ENCODE measurements at regions of chr5 and their contacts with region 1.

Region 1: DNA sequence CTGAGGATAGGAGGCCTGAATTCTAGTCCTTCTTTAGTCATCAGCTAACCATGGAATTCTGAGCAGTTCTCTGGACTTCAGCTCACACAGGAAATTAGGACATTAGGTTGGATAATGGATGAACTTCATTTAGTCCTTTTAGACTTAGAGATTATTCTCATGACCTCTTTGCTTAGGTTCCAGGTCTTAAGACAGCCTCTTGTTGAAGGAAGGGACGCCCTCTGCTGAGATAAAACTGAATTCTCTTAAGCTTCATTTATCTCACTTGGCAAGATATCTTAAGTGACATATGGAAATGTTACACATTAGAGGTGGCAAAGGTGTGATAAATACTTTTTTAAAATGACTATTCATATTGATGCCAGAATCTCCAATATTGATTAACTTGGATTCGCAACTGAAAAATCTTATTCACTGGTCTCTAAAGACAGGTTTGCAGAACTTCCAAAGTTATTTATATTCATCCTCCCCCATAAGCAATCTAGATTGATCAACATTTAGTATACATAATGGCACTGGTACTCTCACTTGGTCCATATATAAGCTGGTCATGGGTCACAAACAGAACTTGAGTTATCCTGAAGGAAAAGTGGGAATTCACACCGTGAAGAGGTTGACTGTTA is 16.9 kb upstream of the ZNF366 start:
- DNase-seq: peak in 1 of 4 experiments; percentile 75
- ATAC-seq: peak; percentile 81
- H3K4me3 ChIP-seq: no peak overlapping the region
- H3K27ac ChIP-seq: no peak overlapping the region
- H3K4me1 ChIP-seq: no peaks in the 10 kb centered on the region
- H3K27me3 ChIP-seq: no peaks in the 10 kb centered on the region
- CTCF ChIP-seq: peak; percentile 47 to 86 (median 52); a peak in 4 of 6 replicates
- EP300 ChIP-seq: no peak
- POLR2A ChIP-seq: no peak
- RAD21 ChIP-seq: peak; percentile 97 to 99

Region 2: DNA sequence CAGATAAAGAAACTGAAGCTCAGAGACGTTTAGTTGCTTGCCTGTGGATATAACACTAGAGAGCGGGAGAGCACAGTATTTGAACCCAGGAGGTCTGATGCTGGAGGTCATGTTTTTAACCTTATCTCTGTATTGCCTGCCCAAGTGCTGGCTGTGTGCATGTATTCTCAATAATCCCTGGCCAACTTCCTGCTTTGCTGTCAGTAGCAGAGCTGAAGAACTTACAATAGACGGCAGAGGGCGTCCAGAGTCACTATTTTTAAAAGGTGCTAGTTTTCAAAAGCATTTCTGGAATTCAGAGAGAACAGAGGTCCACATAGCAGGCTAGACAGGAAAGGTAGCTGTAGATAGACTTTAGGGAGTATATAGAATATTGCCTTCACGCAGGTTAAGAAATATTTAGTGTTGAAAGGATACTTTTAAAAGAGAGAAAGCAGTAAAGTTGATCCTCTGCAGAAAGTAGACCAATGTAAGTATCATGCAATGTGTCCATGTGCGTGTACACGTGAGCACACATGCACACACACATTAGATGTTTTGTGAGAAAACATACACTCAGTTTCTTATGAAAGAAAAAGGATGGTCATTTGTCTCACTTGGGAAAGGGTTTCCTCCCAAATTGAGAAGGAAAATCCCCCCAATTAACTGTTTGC is 157.6 kb before region 1 on chr5:
- CTCF ChIA-PET with region 1: interaction called, 26 read pairs
- POLR2A ChIA-PET with region 1: no interaction called
- in situ Hi-C with region 1: no loop called
- intact Hi-C with region 1: loop called (anchors 1 kb)
- DNase-seq: peak; percentile 26 to 80 (median 42)
- ATAC-seq: peak; percentile 98
- H3K4me3 ChIP-seq: no peak overlapping the region
- H3K27ac ChIP-seq: no peak overlapping the region
- H3K4me1 ChIP-seq: no peaks in the 10 kb centered on the region; a peak in 1 of 5 replicates
- H3K27me3 ChIP-seq: no peaks in the 10 kb centered on the region
- CTCF ChIP-seq: peak; percentile 67 to 85 (median 75)
- EP300 ChIP-seq: no peak
- POLR2A ChIP-seq: no peak
- RAD21 ChIP-seq: peak; percentile 89 to 90

Region 3: GRCh38 chr5:72394688-72395087 is 129.4 kb before region 1 on chr5:
- CTCF ChIA-PET with region 1: interaction called, 8 read pairs
- POLR2A ChIA-PET with region 1: no interaction called
- in situ Hi-C with region 1: no loop called
- intact Hi-C with region 1: loop called (anchors 1 kb)
- DNase-seq: peak in 2 of 4 experiments; percentile 22 to 41
- ATAC-seq: peak; percentile 77
- H3K4me3 ChIP-seq: no peak overlapping the region
- H3K27ac ChIP-seq: no peak overlapping the region
- H3K4me1 ChIP-seq: no peaks in the 10 kb centered on the region
- H3K27me3 ChIP-seq: peaks cover 3 to 7% of the 10 kb centered on the region in 2 experiments; a peak in 3 of 5 replicates
- CTCF ChIP-seq: peak; percentile 55 to 62 (median 59)
- EP300 ChIP-seq: no peak
- POLR2A ChIP-seq: no peak
- RAD21 ChIP-seq: peak; percentile 71 to 77

Region 4: DNA sequence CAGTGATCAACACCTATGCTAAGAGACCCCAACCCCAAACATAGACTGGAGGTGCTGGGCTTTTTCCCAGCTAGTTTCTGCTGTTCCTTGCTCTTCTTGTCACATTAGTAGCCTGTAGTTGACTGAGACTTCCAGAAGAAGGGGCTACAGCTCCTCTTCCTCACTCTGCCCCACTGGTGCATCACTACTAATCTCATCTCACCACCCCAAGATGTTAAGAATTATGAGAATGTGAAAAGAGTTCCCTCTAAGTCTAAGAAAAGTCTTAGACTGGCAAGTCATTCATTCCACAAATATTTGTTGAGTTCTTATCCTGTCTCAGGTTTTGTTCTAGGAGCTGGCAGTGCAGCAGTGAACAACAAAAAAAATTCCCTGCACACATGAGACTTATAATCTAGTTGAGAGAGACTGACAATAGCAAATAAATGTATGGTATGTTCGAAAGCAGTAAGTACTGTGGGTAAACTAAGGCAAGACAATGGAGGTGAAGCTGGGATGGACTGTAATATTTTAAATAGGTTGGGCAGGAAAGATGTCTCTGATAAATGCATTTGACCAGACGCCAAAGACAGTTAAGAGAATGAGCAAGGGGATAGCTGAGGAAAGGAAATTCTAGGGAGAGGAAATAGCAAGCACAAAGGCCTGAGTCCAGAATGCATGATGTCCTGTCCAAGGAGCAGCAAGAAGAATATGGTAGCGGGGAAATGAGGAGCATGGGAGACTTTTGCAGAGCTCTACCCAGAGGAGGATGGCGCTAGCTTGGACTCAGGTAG is 111.6 kb before region 1 on chr5:
- CTCF ChIA-PET with region 1: no interaction called
- POLR2A ChIA-PET with region 1: interaction called, 4 read pairs
- in situ Hi-C with region 1: no loop called
- intact Hi-C with region 1: loop called (anchors 1 kb)
- DNase-seq: no peak
- ATAC-seq: no peak
- H3K4me3 ChIP-seq: no peak overlapping the region
- H3K27ac ChIP-seq: no peak overlapping the region
- H3K4me1 ChIP-seq: peaks cover 0 to 3% of the 10 kb centered on the region in 2 experiments; a peak in 1 of 5 replicates
- H3K27me3 ChIP-seq: peaks cover 0 to 12% of the 10 kb centered on the region in 2 experiments; a peak in 1 of 5 replicates
- CTCF ChIP-seq: peak in 1 of 3 experiments; percentile 31; a peak in 2 of 6 replicates
- EP300 ChIP-seq: no peak
- POLR2A ChIP-seq: no peak
- RAD21 ChIP-seq: peak; percentile 33 to 60

Region 5: GRCh38 chr5:72584466-72584865 is 60.4 kb after region 1 on chr5:
- CTCF ChIA-PET with region 1: no interaction called
- POLR2A ChIA-PET with region 1: no interaction called
- in situ Hi-C with region 1: no loop called
- intact Hi-C with region 1: loop called (anchors 5 kb)
- DNase-seq: peak in 2 of 4 experiments; percentile 17 to 29
- ATAC-seq: peak; percentile 68; the same call in 2 of the 3 replicates
- H3K4me3 ChIP-seq: no peak overlapping the region
- H3K27ac ChIP-seq: no peak overlapping the region
- H3K4me1 ChIP-seq: peaks cover 0 to 18% of the 10 kb centered on the region in 2 experiments; a peak in 3 of 5 replicates
- H3K27me3 ChIP-seq: no peaks in the 10 kb centered on the region
- CTCF ChIP-seq: peak; percentile 6 to 43 (median 18); a peak in 2 of 6 replicates
- EP300 ChIP-seq: no peak
- POLR2A ChIP-seq: no peak
- RAD21 ChIP-seq: peak; percentile 31 to 62; a peak in 2 of 4 replicates

Region 6: DNA sequence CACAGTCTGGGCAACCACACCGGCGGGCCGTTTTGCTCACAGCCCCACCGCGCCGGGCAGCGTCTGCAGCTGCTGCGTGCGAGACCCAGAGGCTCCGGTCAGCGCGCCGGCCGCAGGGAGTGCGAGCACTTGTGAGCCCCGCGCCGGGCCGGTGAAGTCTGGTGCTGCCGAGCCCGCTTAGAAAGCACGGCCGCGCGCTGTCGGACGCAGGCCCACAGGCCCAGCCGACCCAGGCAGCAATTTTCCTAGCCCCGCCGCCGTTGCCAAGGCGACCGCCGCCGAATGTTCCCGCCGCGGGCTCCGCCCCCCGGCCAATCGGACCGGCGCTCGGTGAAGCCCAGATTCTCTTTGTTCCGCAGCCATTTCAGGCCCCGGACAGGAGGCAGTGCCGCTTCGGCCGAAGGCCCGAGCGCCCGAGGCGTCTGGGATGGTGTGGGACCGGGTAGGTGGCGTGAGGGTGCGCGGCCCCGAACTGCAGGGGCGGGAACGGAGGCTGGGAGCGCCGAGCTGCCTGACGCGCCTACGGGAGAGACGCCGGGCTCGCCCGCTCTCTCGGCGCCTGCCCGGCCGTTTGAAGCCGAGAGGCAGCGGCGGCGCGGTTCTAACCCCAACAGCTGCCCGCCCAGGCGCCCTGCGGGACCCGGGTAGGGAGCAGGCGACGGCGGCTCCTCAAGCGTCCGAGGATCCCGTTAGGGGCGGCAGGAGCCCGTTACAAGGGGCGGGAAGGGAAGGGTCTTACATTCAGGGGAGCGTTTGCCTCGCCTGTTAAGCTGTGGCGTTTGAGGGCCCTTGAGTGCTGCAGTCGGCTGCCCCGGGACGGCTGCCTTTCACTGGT is 292.5 kb after region 1 on chr5 and contains the start of gene TNPO1:
- CTCF ChIA-PET with region 1: no interaction called
- POLR2A ChIA-PET with region 1: interaction called, 3 read pairs
- in situ Hi-C with region 1: no loop called
- intact Hi-C with region 1: loop called (anchors 10 kb)
- DNase-seq: peak; percentile 86 to 91 (median 88)
- ATAC-seq: peak; percentile 93
- H3K4me3 ChIP-seq: peak within 1 kb of the TSS; percentile 71
- H3K27ac ChIP-seq: peak within 1 kb of the TSS; percentile 84
- H3K4me1 ChIP-seq: peaks cover 6 to 15% of the 10 kb centered on the region in 2 experiments; a peak in 3 of 5 replicates
- H3K27me3 ChIP-seq: no peaks in the 10 kb centered on the region
- CTCF ChIP-seq: no peak
- EP300 ChIP-seq: no peak
- POLR2A ChIP-seq: peak; percentile 81
- RAD21 ChIP-seq: no peak; a peak in 1 of 4 replicates
- polyA plus RNA-seq, gene TNPO1: 20.8 to 50.0 TPM

Region 7: GRCh38 chr5:72847989-72848473 is 324.0 kb after region 1 on chr5:
- CTCF ChIA-PET with region 1: no interaction called
- POLR2A ChIA-PET with region 1: no interaction called
- in situ Hi-C with region 1: no loop called
- intact Hi-C with region 1: loop called (anchors 10 kb)
- DNase-seq: peak; percentile 73 to 93 (median 80)
- ATAC-seq: peak; percentile 89
- H3K4me3 ChIP-seq: peak overlapping the region; percentile 72
- H3K27ac ChIP-seq: peak overlapping the region; percentile 94
- H3K4me1 ChIP-seq: peaks cover 0 to 13% of the 10 kb centered on the region in 2 experiments; a peak in 3 of 5 replicates
- H3K27me3 ChIP-seq: no peaks in the 10 kb centered on the region
- CTCF ChIP-seq: no peak
- EP300 ChIP-seq: peak; percentile 61
- POLR2A ChIP-seq: peak; percentile 99
- RAD21 ChIP-seq: no peak